ENCODE measurements at regions of chr18 and their contacts with region 1.

Region 1: DNA sequence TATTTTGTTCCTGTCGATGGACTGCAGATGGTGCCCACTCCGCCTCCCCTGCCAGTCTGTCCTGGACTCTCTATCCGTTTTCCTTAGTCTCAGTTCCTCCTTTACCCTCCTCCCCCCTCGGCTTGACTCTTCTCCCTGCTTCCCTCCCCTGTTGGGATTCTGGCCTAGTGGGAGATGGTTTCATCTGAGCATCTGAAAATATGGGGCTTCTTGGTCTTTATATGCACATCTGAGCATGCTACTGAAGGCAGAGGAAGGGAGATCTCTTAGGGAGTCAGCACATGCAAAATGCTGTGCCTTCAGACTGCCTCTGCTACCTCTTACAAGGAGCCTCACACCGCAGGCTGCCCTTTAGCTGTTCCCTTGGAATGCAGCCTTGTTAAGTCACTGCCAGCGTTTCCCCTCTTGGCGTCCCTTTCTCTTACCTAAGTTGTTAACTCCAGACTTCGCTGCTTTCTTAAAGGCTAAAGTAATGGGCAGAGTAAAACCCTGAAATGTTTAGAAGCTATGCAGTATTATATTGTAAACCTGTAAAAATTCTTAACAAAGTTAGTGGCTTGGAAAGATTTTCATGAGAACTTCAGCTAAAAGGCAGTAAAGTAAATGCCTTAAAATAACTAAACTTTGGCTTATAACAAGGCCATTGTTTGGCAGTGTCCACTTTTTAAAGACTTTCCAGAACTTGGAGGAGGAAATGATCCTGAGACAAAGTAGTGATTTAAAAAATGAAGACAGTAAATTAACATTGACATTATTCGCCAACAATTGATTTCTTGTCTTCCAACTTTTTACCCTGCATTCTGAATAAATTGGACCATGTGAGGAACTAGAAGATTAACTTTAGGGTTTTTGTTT is 49.8 kb downstream of the LDLRAD4 start:
- DNase-seq: no peak
- ATAC-seq: no peak
- H3K4me3 Mint-ChIP-seq: no peak overlapping the region
- H3K27ac Mint-ChIP-seq: peak overlapping the region; percentile 93
- H3K4me1 Mint-ChIP-seq: peaks cover 83% of the 10 kb centered on the region
- H3K27me3 Mint-ChIP-seq: no peaks in the 10 kb centered on the region
- CTCF ChIP-seq: no peak

Region 2: DNA sequence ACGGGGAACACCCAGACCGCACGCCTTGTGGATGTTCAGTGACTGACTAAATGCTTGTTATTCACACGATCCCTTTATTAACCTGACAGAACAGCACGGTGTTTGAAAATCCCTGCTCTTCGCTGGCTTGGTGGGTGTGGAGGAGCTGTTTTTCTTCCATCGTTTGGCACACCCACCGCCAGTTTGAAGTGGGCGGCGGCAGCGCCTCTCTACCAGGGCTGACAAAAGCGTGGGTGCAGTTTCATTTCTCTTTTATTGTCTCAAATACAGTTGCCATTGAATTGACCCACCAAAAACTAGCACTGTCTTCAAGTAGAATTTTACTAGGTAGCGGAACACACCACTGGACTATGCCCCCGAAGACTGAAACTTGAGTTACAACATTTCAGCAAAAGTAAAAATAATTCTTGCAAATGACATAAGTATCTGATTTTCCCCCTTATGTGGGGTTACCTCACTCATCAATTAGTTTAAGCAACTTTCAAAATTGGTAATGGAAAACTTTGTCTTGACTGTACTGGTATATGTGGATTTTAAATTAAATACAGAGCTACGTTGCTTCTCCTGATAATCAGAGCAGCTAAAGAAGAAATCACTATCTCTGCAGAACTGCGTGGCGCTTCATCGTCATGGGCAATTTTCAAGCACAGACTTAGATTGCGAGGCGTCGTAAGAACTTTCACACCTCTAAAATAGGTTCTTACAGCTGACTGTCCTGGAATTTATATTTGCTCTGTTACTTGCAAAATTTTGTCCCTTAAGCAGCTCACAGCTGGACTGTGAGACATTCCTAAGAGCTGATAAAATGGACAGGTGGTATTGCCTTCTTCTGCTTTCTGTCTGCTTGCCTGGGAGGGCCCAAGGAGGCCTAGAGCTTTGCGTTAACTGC is 11.0 kb after region 1 on chr18:
- CTCF ChIA-PET with region 1: interaction called, 6 read pairs
- POLR2A ChIA-PET with region 1: interaction called, 60 read pairs
- intact Hi-C with region 1: no loop called
- DNase-seq: peak; percentile 80
- ATAC-seq: peak; percentile 59
- H3K4me3 Mint-ChIP-seq: peak overlapping the region; percentile 64
- H3K27ac Mint-ChIP-seq: peak overlapping the region; percentile 83
- H3K4me1 Mint-ChIP-seq: peaks cover 88% of the 10 kb centered on the region
- H3K27me3 Mint-ChIP-seq: no peaks in the 10 kb centered on the region
- CTCF ChIP-seq: no peak

Region 3: GRCh38 chr18:13289481-13290205 is 21.3 kb after region 1 on chr18:
- CTCF ChIA-PET with region 1: interaction called, 4 read pairs
- POLR2A ChIA-PET with region 1: interaction called, 10 read pairs
- intact Hi-C with region 1: no loop called
- DNase-seq: no peak
- ATAC-seq: no peak
- H3K4me3 Mint-ChIP-seq: no peak overlapping the region
- H3K27ac Mint-ChIP-seq: peak overlapping the region; percentile 50
- H3K4me1 Mint-ChIP-seq: peaks cover 73% of the 10 kb centered on the region
- H3K27me3 Mint-ChIP-seq: no peaks in the 10 kb centered on the region
- CTCF ChIP-seq: no peak

Region 4: GRCh38 chr18:13313006-13313686 is 44.8 kb after region 1 on chr18:
- CTCF ChIA-PET with region 1: no interaction called
- POLR2A ChIA-PET with region 1: no interaction called
- intact Hi-C with region 1: loop called (anchors 5 kb)
- DNase-seq: peak; percentile 49
- ATAC-seq: peak; percentile 41
- H3K4me3 Mint-ChIP-seq: no peak overlapping the region
- H3K27ac Mint-ChIP-seq: peak overlapping the region; percentile 72
- H3K4me1 Mint-ChIP-seq: peaks cover 49% of the 10 kb centered on the region
- H3K27me3 Mint-ChIP-seq: no peaks in the 10 kb centered on the region
- CTCF ChIP-seq: no peak

Region 5: GRCh38 chr18:13375302-13376255 is 107.2 kb after region 1 on chr18:
- CTCF ChIA-PET with region 1: interaction called, 5 read pairs
- POLR2A ChIA-PET with region 1: interaction called, 10 read pairs
- intact Hi-C with region 1: loop called (anchors 5 kb)
- DNase-seq: peak; percentile 91
- ATAC-seq: peak; percentile 75
- H3K4me3 Mint-ChIP-seq: peak overlapping the region; percentile 56
- H3K27ac Mint-ChIP-seq: peak overlapping the region; percentile 96
- H3K4me1 Mint-ChIP-seq: peaks cover 88% of the 10 kb centered on the region
- H3K27me3 Mint-ChIP-seq: no peaks in the 10 kb centered on the region
- CTCF ChIP-seq: no peak

Region 6: GRCh38 chr18:13425462-13426133 is 157.2 kb after region 1 on chr18:
- CTCF ChIA-PET with region 1: no interaction called
- POLR2A ChIA-PET with region 1: no interaction called
- intact Hi-C with region 1: no loop called
- DNase-seq: peak; percentile 73
- ATAC-seq: peak; percentile 72
- H3K4me3 Mint-ChIP-seq: no peak overlapping the region
- H3K27ac Mint-ChIP-seq: no peak overlapping the region
- H3K4me1 Mint-ChIP-seq: peaks cover 33% of the 10 kb centered on the region
- H3K27me3 Mint-ChIP-seq: no peaks in the 10 kb centered on the region
- CTCF ChIP-seq: no peak

Region 7: DNA sequence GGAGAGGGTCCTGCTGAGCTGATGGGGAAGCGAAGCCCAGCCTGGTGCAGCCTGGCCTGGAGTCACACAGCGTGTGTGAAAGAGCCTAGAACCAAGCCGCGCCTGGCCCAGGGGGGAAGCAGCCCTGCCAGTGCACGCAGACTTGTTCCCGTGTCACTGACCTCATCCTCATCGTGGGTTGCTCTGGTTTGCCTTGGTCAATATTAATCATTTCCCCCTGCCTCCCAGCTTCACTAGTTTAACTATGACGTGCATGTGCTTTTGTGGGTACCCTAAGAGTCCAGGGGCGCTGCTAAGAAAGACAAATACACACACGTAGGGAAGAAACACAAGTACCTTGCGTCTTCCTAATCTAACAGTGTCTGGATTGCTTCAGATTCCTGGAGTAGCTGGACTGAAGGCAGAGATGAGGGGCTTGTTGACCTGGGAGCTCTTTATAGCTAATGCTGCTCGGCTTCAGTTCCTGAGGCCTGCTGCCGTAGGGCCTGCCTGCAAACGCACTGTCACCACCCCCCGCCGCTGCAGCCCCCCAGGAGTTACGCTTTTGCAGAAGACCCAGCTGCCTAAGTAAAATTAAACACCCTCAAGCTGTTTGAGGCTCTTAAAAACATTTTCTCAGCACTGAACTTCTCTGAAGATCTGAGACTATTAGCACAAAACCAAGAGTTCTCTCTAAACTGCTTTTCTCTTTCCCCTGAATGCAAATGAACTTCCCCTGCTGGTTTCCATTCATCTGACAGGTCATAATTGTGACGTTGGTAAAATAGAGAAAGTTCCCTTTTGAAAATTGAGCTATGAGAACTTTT is 298.8 kb after region 1 on chr18:
- CTCF ChIA-PET with region 1: no interaction called
- POLR2A ChIA-PET with region 1: interaction called, 5 read pairs
- intact Hi-C with region 1: loop called (anchors 5 kb)
- DNase-seq: peak; percentile 81
- ATAC-seq: peak; percentile 34
- H3K4me3 Mint-ChIP-seq: peak overlapping the region; percentile 56
- H3K27ac Mint-ChIP-seq: peak overlapping the region; percentile 95
- H3K4me1 Mint-ChIP-seq: peaks cover 85% of the 10 kb centered on the region
- H3K27me3 Mint-ChIP-seq: no peaks in the 10 kb centered on the region
- CTCF ChIP-seq: no peak